Activated CD4-positive, alpha-beta T cell treated with anti-CD3 and anti-CD28 coated beads for 36 hours (primary cell): ENCODE measurements at regions of chr19 and their contacts with region 1.

Region 1: DNA sequence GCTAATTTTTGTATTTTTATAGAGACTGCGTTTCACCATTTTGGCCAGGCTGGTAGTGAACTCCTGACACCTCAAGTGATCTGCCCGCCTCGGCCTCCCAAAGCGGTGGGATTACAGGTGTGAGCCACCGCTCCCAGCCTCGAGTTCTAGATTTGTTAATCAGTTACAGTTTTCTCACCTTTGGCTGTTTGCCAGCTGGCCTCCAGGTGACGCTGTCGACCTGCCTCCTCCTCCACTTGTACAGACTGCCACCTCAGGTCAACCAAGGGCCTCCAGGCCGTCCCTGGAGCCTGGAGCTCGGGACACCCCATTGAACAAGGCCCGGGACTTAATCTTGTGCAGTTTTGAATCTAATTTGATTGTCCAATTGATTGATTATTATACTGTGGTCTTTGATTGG is 45.5 kb downstream of the IER2 start:
- DNase-seq: peak; percentile 74
- ATAC-seq: no peak
- H3K4me3 Mint-ChIP-seq: no peak overlapping the region
- H3K27ac Mint-ChIP-seq: no peak overlapping the region
- H3K4me1 Mint-ChIP-seq: peaks cover 34% of the 10 kb centered on the region
- H3K27me3 Mint-ChIP-seq: no peaks in the 10 kb centered on the region

Region 2: GRCh38 chr19:13181747-13182388 is 13.8 kb before region 1 on chr19:
- CTCF ChIA-PET with region 1: interaction called, 10 read pairs
- POLR2A ChIA-PET with region 1: no interaction called
- intact Hi-C with region 1: no loop called
- DNase-seq: peak; percentile 65
- ATAC-seq: peak; percentile 66
- H3K4me3 Mint-ChIP-seq: no peak overlapping the region
- H3K27ac Mint-ChIP-seq: peak overlapping the region; percentile 63
- H3K4me1 Mint-ChIP-seq: peaks cover 27% of the 10 kb centered on the region
- H3K27me3 Mint-ChIP-seq: no peaks in the 10 kb centered on the region

Region 3: GRCh38 chr19:13234518-13234917 is 38.8 kb after region 1 on chr19:
- CTCF ChIA-PET with region 1: interaction called, 5 read pairs
- POLR2A ChIA-PET with region 1: no interaction called
- intact Hi-C with region 1: loop called in 1 of 2 experiments (anchors 1 kb)
- DNase-seq: peak; percentile 86
- ATAC-seq: peak; percentile 95
- H3K4me3 Mint-ChIP-seq: peak overlapping the region; percentile 47
- H3K27ac Mint-ChIP-seq: peak overlapping the region; percentile 71
- H3K4me1 Mint-ChIP-seq: peaks cover 14% of the 10 kb centered on the region
- H3K27me3 Mint-ChIP-seq: no peaks in the 10 kb centered on the region

Region 4: DNA sequence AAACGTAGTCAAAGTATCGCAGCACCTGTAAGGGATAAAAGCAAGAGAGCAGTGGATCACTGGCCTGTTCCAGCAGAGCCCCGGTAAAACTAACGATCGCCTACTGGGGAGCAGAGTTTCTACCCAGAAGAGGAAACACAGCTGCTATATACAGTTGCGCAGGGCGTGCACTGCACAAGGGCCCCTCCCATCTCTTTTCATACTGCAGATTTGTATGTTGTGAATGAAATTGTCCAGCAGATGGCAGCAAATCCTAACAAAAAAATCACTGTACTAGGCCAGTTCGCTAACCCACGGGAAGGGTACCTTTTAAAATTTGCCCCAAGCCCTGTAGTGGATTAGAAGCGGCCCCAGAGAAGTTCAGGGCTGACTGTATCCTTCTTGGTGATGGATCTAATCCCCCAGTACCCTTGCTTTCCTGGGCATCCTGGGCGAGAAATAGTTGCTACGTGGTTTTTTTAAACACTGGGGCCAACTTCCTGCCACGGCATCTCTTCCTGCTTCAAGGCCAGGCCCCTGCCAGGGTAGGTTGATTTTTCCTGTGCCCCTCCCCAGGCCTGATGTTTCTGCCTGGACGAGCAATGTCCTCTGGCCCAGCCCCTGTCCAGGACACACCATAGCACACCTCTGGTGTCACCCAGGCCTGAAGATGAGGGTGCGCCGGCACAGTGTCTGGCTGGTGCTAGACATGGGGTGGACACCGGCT is 81.6 kb after region 1 on chr19:
- CTCF ChIA-PET with region 1: interaction called, 4 read pairs
- POLR2A ChIA-PET with region 1: no interaction called
- intact Hi-C with region 1: loop called in 1 of 2 experiments (anchors 1 kb)
- DNase-seq: peak; percentile 76
- ATAC-seq: peak; percentile 96
- H3K4me3 Mint-ChIP-seq: no peak overlapping the region
- H3K27ac Mint-ChIP-seq: peak overlapping the region; percentile 86
- H3K4me1 Mint-ChIP-seq: peaks cover 13% of the 10 kb centered on the region
- H3K27me3 Mint-ChIP-seq: no peaks in the 10 kb centered on the region